Endothelial cell of umbilical vein (primary cell): ENCODE measurements at regions of chr7 and their contacts with region 1.

Region 1: GRCh38 chr7:2863461-2864066 is 19.5 kb upstream of the GNA12 start:
- DNase-seq: peak; percentile 94
- H3K4me3 ChIP-seq: peak overlapping the region in 1 of 3 experiments; percentile 34
- H3K27ac ChIP-seq: peak overlapping the region; percentile 94
- H3K4me1 ChIP-seq: peaks cover 22% of the 10 kb centered on the region
- H3K27me3 ChIP-seq: no peaks in the 10 kb centered on the region
- CTCF ChIP-seq: no peak
- POLR2A ChIP-seq: peak; percentile 46

Region 2: GRCh38 chr7:2451171-2452073 is 412.1 kb before region 1 on chr7:
- CTCF ChIA-PET with region 1: no interaction called
- POLR2A ChIA-PET with region 1: no interaction called
- dilution Hi-C with region 1: no loop called
- intact Hi-C with region 1: loop called (anchors 10 kb)
- DNase-seq: peak; percentile 63
- H3K4me3 ChIP-seq: no peak overlapping the region
- H3K27ac ChIP-seq: no peak overlapping the region
- H3K4me1 ChIP-seq: peaks cover 5% of the 10 kb centered on the region
- H3K27me3 ChIP-seq: no peaks in the 10 kb centered on the region
- CTCF ChIP-seq: peak; percentile 95 to 97
- POLR2A ChIP-seq: no peak

Region 3: DNA sequence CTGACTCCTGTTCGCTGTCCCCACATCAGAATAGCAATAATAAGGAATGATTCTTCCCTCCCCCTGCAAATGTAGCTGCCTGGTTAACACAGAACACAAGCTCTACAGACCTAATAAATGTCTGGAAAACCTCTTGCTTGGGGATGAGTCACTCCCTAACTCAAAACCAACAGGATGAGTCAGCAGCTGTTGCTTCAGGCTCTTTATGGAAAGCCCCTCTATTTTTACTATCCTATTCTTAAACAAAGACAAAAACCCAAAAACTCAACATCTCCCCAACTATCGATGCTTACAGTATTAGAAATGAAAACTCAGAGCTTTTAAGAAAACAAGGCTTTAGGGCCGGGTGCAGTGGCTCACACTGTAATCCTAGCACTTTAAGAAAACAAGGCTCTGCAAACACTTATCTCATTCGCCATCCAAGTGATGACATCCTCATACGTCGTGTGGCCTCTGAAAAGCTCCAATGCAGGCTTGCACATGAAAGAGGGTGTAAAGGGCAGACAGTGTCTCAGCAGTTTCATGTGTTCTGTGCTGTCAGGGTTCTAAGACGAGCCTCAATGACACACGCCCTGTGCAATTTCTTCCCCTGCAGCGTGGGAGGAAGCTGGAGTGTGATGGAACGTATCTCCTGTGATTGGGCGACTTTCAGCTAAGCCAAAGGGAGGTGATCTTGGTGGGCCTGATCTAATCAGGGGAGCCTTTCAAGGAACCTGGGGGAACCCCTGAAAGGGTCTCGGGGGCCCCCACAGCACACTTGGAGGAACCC is 105.5 kb before region 1 on chr7:
- CTCF ChIA-PET with region 1: interaction called, 4 read pairs
- POLR2A ChIA-PET with region 1: no interaction called
- dilution Hi-C with region 1: no loop called
- intact Hi-C with region 1: loop called (anchors 5 kb)
- DNase-seq: peak; percentile 93
- H3K4me3 ChIP-seq: peak overlapping the region in 1 of 3 experiments; percentile 20
- H3K27ac ChIP-seq: peak overlapping the region; percentile 81
- H3K4me1 ChIP-seq: peaks cover 27% of the 10 kb centered on the region
- H3K27me3 ChIP-seq: no peaks in the 10 kb centered on the region
- CTCF ChIP-seq: no peak
- POLR2A ChIP-seq: no peak

Region 4: DNA sequence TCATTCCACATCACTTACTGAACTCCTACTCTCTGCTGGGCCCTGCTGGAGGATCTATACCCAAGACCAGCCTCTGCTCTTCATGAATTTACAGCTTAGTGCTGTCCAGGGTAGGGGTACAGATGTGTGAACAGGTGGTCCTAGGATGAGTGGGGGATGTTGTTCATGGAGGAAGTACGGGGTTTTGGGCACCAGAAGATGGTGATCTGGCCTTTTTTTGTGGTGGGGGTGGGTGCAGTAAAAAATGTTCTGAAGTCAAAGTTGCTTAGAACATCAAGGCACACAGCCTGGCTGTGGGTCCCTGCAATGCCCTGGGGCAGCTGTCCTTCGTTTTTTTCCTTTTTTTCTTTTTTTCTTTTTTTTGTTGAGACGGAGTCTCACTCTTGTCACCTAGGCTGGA is 14.7 kb after region 1 on chr7:
- CTCF ChIA-PET with region 1: interaction called, 20 read pairs
- POLR2A ChIA-PET with region 1: interaction called, 3 read pairs
- dilution Hi-C with region 1: no loop called
- intact Hi-C with region 1: loop called (anchors 1 kb)
- DNase-seq: no peak
- H3K4me3 ChIP-seq: no peak overlapping the region
- H3K27ac ChIP-seq: no peak overlapping the region
- H3K4me1 ChIP-seq: peaks cover 3% of the 10 kb centered on the region
- H3K27me3 ChIP-seq: no peaks in the 10 kb centered on the region
- CTCF ChIP-seq: no peak
- POLR2A ChIP-seq: no peak

Region 5: GRCh38 chr7:3200504-3200903 is 336.9 kb after region 1 on chr7:
- CTCF ChIA-PET with region 1: interaction called, 6 read pairs
- POLR2A ChIA-PET with region 1: no interaction called
- dilution Hi-C with region 1: no loop called
- intact Hi-C with region 1: loop called (anchors 1 kb)
- DNase-seq: peak; percentile 36
- H3K4me3 ChIP-seq: no peak overlapping the region
- H3K27ac ChIP-seq: no peak overlapping the region
- H3K4me1 ChIP-seq: no peaks in the 10 kb centered on the region
- H3K27me3 ChIP-seq: no peaks in the 10 kb centered on the region
- CTCF ChIP-seq: peak; percentile 47 to 51
- POLR2A ChIP-seq: no peak

Region 6: DNA sequence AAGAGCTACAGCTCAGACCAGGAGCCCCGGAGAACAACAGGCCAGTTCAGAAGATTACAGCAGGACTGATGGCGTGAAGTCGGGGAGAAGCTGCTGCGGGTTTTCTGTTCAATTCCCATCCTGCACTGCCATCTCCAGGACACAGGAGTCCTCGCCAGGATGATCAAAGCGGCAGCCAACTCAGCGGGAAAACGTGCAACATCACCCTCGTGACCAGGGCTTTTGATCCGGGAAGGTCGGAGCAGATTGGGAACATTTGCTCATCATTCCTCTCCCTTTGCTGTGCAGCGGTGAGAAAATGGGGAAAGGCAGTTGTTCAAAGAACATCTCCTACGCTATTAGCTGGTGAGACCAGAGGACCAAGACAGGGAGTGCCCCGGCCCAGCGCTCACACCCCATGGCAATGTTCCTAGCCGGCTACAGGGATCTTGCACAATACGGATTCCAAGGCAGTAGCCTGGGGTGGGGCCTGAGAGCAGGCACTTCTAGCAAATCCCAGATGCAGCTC is 1768.2 kb after region 1 on chr7:
- CTCF ChIA-PET with region 1: interaction called, 3 read pairs
- POLR2A ChIA-PET with region 1: no interaction called
- dilution Hi-C with region 1: no loop called
- intact Hi-C with region 1: loop called (anchors 10 kb)
- DNase-seq: peak; percentile 76
- H3K4me3 ChIP-seq: no peak overlapping the region
- H3K27ac ChIP-seq: no peak overlapping the region
- H3K4me1 ChIP-seq: peaks cover 3% of the 10 kb centered on the region
- H3K27me3 ChIP-seq: no peaks in the 10 kb centered on the region
- CTCF ChIP-seq: peak; percentile 65 to 66
- POLR2A ChIP-seq: no peak